CD4-positive, alpha-beta T cell (primary cell): ENCODE measurements at regions of chr3 and their contacts with region 1.

Region 1: GRCh38 chr3:50260027-50260941 is 8.7 kb upstream of the SEMA3B start:
- DNase-seq: peak; percentile 58 to 92 (median 74)
- ATAC-seq: peak; percentile 91
- H3K4me3 ChIP-seq: peak overlapping the region; percentile 52
- H3K4me3 Mint-ChIP-seq: peak overlapping the region; percentile 74
- H3K27ac ChIP-seq: peak overlapping the region in 1 of 2 donors; percentile 29
- H3K27ac Mint-ChIP-seq: peak overlapping the region; percentile 51
- H3K4me1 ChIP-seq: peaks cover 15% of the 10 kb centered on the region
- H3K4me1 Mint-ChIP-seq: peaks cover 3% of the 10 kb centered on the region
- H3K27me3 ChIP-seq: no peaks in the 10 kb centered on the region
- H3K27me3 Mint-ChIP-seq: no peaks in the 10 kb centered on the region
- CTCF ChIP-seq: peak; percentile 87

Region 2: GRCh38 chr3:49217688-49218470 is 1042.4 kb before region 1 on chr3:
- CTCF ChIA-PET with region 1: no interaction called
- POLR2A ChIA-PET with region 1: no interaction called
- intact Hi-C with region 1: no loop called
- DNase-seq: no peak
- ATAC-seq: no peak
- H3K4me3 ChIP-seq: no peak overlapping the region
- H3K4me3 Mint-ChIP-seq: no peak overlapping the region
- H3K27ac ChIP-seq: no peak overlapping the region
- H3K27ac Mint-ChIP-seq: no peak overlapping the region
- H3K4me1 ChIP-seq: no peaks in the 10 kb centered on the region
- H3K4me1 Mint-ChIP-seq: no peaks in the 10 kb centered on the region
- H3K27me3 ChIP-seq: peaks cover 0 to 3% of the 10 kb centered on the region in 2 experiments
- H3K27me3 Mint-ChIP-seq: peaks cover 6% of the 10 kb centered on the region
- CTCF ChIP-seq: no peak

Region 3: GRCh38 chr3:50321336-50322114 is 61.2 kb after region 1 on chr3:
- CTCF ChIA-PET with region 1: no interaction called
- POLR2A ChIA-PET with region 1: no interaction called
- intact Hi-C with region 1: no loop called
- DNase-seq: peak; percentile 68 to 89 (median 76)
- ATAC-seq: peak; percentile 66
- H3K4me3 ChIP-seq: peak overlapping the region; percentile 68
- H3K4me3 Mint-ChIP-seq: peak overlapping the region; percentile 90
- H3K27ac ChIP-seq: peak overlapping the region; percentile 75 to 96
- H3K27ac Mint-ChIP-seq: peak overlapping the region; percentile 82
- H3K4me1 ChIP-seq: peaks cover 76% of the 10 kb centered on the region
- H3K4me1 Mint-ChIP-seq: peaks cover 42% of the 10 kb centered on the region
- H3K27me3 ChIP-seq: no peaks in the 10 kb centered on the region
- H3K27me3 Mint-ChIP-seq: no peaks in the 10 kb centered on the region
- CTCF ChIP-seq: peak; percentile 45

Region 4: GRCh38 chr3:50568947-50569749 is 308.9 kb after region 1 on chr3 and contains the start of gene HEMK1:
- CTCF ChIA-PET with region 1: no interaction called
- POLR2A ChIA-PET with region 1: no interaction called
- intact Hi-C with region 1: no loop called
- DNase-seq: peak; percentile 84 to 97 (median 91)
- ATAC-seq: peak; percentile 64
- H3K4me3 ChIP-seq: peak within 1 kb of the TSS; percentile 77
- H3K4me3 Mint-ChIP-seq: peak within 1 kb of the TSS; percentile 97
- H3K27ac ChIP-seq: peak within 1 kb of the TSS; percentile 80 to 83
- H3K27ac Mint-ChIP-seq: peak within 1 kb of the TSS; percentile 89
- H3K4me1 ChIP-seq: peaks cover 79% of the 10 kb centered on the region
- H3K4me1 Mint-ChIP-seq: peaks cover 78% of the 10 kb centered on the region
- H3K27me3 ChIP-seq: no peaks in the 10 kb centered on the region
- H3K27me3 Mint-ChIP-seq: no peaks in the 10 kb centered on the region
- CTCF ChIP-seq: no peak
- total RNA-seq, gene HEMK1: 12.4 to 14.6 TPM

Region 5: DNA sequence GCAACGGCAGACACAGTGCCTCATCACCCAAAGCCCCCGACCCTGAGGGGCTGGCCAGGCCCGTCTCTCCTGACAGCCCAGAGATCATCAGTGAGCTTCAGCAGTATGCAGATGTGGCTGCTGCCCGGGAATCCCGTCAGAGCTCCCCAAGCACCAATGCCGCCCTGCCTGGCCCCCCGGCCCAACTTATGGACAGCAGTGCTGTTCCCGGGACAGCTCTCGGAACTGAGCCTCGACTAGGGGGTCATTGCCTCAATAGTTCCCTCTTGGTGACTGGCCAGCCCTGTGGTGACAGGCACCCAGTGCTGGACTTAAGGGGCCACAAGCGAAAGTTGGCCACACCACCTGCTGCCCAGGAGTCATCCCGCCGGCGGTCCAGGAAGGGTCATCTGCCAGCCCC is 1402.2 kb after region 1 on chr3:
- CTCF ChIA-PET with region 1: no interaction called
- POLR2A ChIA-PET with region 1: no interaction called
- intact Hi-C with region 1: loop called in 1 of 2 experiments (anchors 5 kb)
- DNase-seq: no peak
- ATAC-seq: no peak
- H3K4me3 ChIP-seq: no peak overlapping the region
- H3K4me3 Mint-ChIP-seq: no peak overlapping the region
- H3K27ac ChIP-seq: no peak overlapping the region
- H3K27ac Mint-ChIP-seq: no peak overlapping the region
- H3K4me1 ChIP-seq: no peaks in the 10 kb centered on the region
- H3K4me1 Mint-ChIP-seq: peaks cover 15% of the 10 kb centered on the region
- H3K27me3 ChIP-seq: no peaks in the 10 kb centered on the region
- H3K27me3 Mint-ChIP-seq: no peaks in the 10 kb centered on the region
- CTCF ChIP-seq: no peak